G401 (cell line): ENCODE measurements at regions of chr17 and their contacts with region 1.

Region 1: GRCh38 chr17:44324571-44325275 is at the start of gene SLC25A39:
- DNase-seq: peak; percentile 92
- total RNA-seq, gene SLC25A39: 335 and 340 TPM in 2 replicates

Region 2: GRCh38 chr17:44199553-44200477 is 124.9 kb before region 1 on chr17 and contains the start of gene ATXN7L3:
- in situ Hi-C with region 1: loop called (anchors 10 kb)
- DNase-seq: peak; percentile 96
- total RNA-seq, gene ATXN7L3: 53.8 and 68.3 TPM in 2 replicates

Region 3: DNA sequence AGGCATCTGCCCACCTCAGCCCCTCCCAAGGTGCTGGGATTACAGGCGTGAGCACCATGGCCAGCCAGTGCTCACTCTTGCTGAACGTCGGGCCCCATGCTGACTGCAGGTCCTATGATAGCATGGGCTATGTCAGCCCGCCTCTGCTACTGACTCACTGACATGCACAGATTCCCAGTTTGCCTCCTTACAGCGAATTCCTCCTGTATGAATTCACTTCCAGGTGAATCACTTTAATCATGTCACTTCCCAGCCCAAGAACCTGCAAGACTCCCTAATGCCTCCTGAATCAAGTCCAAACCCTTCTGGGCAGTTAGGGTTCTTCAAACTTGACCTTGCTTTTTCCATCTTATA is 89.2 kb before region 1 on chr17:
- in situ Hi-C with region 1: no loop called
- DNase-seq: peak; percentile 25

Region 4: GRCh38 chr17:44258811-44259351 is 65.8 kb before region 1 on chr17:
- in situ Hi-C with region 1: loop called (anchors 10 kb)
- DNase-seq: no peak